ENCODE measurements at regions of chr19 and their contacts with region 1.

Region 1: DNA sequence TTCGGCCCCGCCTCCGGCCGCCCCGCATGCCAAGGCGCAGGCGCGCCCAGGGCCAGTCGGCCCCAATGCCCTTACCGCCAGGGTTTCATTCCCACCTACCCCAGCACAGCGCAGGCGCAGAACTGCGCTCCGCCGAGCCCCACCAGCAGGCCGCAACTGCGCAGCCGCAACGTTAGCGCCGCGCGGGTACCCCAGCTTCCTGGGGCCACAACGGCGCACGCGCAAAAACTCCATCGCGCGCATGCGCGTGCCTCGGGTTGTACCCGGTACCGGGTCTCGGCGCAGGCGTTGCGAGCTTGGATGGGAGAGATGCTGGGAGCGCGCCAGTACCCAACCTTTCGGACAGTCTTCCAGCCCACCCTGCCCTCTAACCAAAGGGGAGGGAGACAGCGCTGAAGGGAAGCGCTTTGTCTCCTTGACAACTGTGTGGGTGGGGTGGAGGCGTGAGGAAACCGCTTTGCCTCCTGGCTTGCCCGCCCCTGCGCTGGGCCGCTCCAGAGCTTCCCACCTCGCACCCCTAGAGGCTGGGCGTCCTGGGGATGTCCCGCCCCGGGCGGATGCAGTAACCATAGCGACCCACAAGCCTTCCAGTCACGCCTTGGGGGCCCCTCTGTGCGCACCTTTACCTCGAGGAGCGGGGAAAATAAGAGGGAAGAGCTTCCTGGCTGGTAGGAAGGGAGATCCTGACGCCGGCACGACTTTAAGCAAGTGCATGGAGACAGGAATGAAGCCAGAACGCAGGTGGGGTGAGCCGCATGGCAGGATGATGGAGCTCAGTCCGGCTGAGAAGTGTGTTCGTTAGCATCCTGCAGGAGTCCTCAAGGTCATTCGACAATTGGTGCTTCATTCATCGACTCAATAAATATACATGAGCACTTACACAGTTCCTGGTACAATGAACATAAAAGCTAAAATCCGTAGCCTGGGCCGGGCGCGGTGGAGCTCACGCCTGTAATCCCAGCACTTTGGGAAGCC is 525 bp upstream of the MYPOP start:
- DNase-seq: peak; percentile 95 to 97
- ATAC-seq: peak; percentile 95 to 96
- H3K4me3 ChIP-seq: peak overlapping the region; percentile 73 to 87 (median 79)
- H3K27ac ChIP-seq: peak overlapping the region; percentile 76 to 86 (median 82)
- H3K4me1 ChIP-seq: peaks cover 7 to 16% of the 10 kb centered on the region in 2 donors
- H3K27me3 ChIP-seq: no peaks in the 10 kb centered on the region
- CTCF ChIP-seq: no peak
- POLR2A ChIP-seq: peak in 1 of 2 donors; percentile 44

Region 2: DNA sequence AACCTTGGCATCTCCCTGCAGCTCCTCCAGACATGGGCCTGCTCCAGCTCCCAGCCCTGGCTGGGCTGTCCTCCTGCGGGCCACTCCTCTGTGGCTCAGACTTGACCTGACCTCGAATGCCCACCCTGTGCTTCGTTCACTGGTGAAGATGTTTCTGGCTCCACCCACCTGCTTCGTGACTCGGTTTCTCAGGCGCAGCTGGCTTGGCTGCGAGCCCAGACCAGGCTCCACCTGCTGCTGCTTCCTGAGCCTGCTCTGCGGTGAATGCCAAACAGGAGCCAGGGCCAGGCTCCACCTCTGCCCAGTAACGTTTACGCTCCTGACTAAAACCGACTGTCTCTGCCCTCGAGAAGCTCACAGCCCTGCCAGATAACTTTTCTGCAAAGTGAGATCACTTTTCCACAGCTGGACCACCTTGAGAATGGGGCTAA is 78.9 kb before region 1 on chr19:
- in situ Hi-C with region 1: no loop called
- intact Hi-C with region 1: no loop called
- DNase-seq: peak in 1 of 2 donors; percentile 40
- ATAC-seq: peak in 1 of 2 donors; percentile 43
- H3K4me3 ChIP-seq: no peak overlapping the region
- H3K27ac ChIP-seq: peak overlapping the region in 1 of 4 donors; percentile 25
- H3K4me1 ChIP-seq: peaks cover 0 to 7% of the 10 kb centered on the region in 2 donors
- H3K27me3 ChIP-seq: no peaks in the 10 kb centered on the region
- CTCF ChIP-seq: no peak
- POLR2A ChIP-seq: no peak

Region 3: GRCh38 chr19:45862564-45863334 is 40.2 kb before region 1 on chr19 and contains the start of gene SYMPK:
- in situ Hi-C with region 1: no loop called
- intact Hi-C with region 1: loop called (anchors 1 kb)
- DNase-seq: peak; percentile 98 to 99
- ATAC-seq: peak; percentile 99
- H3K4me3 ChIP-seq: peak within 1 kb of the TSS; percentile 62 to 95 (median 86)
- H3K27ac ChIP-seq: peak within 1 kb of the TSS; percentile 85 to 95 (median 90)
- H3K4me1 ChIP-seq: peaks cover 17 to 22% of the 10 kb centered on the region in 2 donors
- H3K27me3 ChIP-seq: peaks cover 10 to 16% (median 10%) of the 10 kb centered on the region in 3 donors
- CTCF ChIP-seq: no peak
- POLR2A ChIP-seq: peak; percentile 62 to 82
- total RNA-seq, gene SYMPK: 14.1 to 64.6 (median 34.9) TPM

Region 4: GRCh38 chr19:45876411-45877197 is 26.3 kb before region 1 on chr19:
- in situ Hi-C with region 1: no loop called
- intact Hi-C with region 1: no loop called
- DNase-seq: no peak
- ATAC-seq: no peak
- H3K4me3 ChIP-seq: peak overlapping the region in 3 of 4 donors; percentile 29 to 42 (median 32)
- H3K27ac ChIP-seq: peak overlapping the region; percentile 7 to 76 (median 52)
- H3K4me1 ChIP-seq: peaks cover 0 to 1% of the 10 kb centered on the region in 2 donors
- H3K27me3 ChIP-seq: peaks cover 0 to 9% (median 0%) of the 10 kb centered on the region in 3 donors
- CTCF ChIP-seq: no peak
- POLR2A ChIP-seq: no peak

Region 5: DNA sequence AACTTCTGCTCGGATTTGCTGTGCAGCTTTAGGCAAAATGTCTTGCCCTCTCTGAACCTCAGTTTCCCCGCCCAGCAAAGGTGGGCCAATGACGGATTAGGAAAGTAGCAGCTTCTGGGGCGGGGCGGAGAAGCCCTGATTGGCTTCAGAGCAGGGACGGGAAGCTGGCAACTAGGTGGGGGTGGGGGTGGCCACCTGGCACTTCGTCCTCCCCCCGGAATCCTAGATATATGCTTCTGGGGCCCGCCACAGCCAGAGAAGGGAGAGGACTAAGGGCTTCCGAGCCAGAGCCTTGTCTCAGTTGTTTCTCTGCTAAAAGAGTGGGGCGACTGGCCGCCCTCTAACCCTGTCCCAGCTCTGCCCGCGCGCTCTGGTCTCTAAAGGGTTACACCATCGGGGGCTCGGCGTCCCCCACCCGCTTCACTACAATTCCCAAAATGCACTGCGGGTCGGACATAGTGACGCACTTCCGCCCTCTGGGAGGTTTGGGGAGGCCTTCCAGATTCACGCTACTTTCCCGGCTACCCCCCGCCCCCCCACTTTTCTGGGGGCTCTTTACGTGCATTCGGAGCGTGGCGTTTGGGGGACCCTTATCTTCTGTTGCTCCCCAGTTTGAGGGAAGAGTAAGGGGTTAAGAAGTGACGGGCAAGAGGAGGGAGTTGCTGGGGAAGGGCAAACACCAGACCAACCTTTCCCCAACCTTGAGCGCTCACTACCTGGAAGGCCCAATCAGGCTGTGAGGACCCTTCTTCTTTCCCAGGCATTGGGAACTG is 16.3 kb before region 1 on chr19:
- in situ Hi-C with region 1: no loop called
- intact Hi-C with region 1: loop called (anchors 1 kb)
- DNase-seq: peak; percentile 82 to 89
- ATAC-seq: peak; percentile 89 to 91
- H3K4me3 ChIP-seq: peak overlapping the region; percentile 63 to 84 (median 66)
- H3K27ac ChIP-seq: peak overlapping the region; percentile 86 to 95 (median 92)
- H3K4me1 ChIP-seq: peaks cover 34 to 43% of the 10 kb centered on the region in 2 donors
- H3K27me3 ChIP-seq: no peaks in the 10 kb centered on the region
- CTCF ChIP-seq: peak in 1 of 5 experiments; percentile 11
- POLR2A ChIP-seq: peak; percentile 49 to 63

Region 6: GRCh38 chr19:45927565-45928261 is 24.8 kb after region 1 on chr19:
- in situ Hi-C with region 1: no loop called
- intact Hi-C with region 1: loop called (anchors 1 kb)
- DNase-seq: peak; percentile 84 to 85
- ATAC-seq: peak; percentile 87 to 99
- H3K4me3 ChIP-seq: peak overlapping the region in 2 of 4 donors; percentile 0 to 15
- H3K27ac ChIP-seq: no peak overlapping the region
- H3K4me1 ChIP-seq: peaks cover 0 to 7% of the 10 kb centered on the region in 2 donors
- H3K27me3 ChIP-seq: no peaks in the 10 kb centered on the region
- CTCF ChIP-seq: peak in 1 of 5 experiments; percentile 9
- POLR2A ChIP-seq: no peak

Region 7: DNA sequence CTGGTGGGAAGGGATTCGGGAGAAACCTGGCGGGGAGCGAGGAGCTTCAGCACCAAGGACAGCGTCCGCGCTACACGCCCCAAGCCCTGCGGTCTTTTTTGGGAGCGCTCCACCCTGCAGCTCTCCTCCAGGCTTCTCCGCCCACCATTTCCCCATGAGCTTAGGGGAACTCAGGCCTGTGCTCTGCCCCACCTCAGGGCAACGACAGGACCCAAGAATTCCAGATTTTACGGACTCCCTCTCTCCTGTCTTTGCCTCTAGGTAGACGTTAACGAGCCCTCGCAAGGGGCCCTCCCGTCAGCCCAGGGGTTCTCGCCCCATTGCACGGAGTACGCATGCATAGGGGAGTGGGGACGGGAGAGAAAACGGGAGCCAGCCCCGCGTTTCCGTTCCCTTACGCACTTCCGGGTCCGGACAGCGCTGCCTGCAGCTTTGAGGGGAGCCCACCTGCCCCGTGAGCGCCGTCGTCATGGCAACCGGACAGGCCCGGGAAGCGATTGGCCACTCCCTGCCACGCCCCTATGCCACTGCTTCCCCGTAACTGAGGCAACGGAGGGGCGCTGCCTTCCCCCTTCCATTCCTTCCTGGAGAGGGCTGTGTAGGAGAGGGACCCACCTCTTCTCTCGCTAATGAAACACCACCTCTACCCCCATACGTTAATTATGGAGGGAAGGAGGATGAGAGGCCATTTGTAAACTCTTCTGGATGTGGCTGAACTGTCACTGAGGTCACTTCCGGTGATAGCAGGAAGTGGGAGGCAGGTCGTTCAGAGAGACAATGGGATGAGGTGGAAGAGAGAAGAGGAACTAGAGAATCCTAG is 50.0 kb after region 1 on chr19:
- in situ Hi-C with region 1: no loop called
- intact Hi-C with region 1: no loop called
- DNase-seq: no peak
- ATAC-seq: no peak
- H3K4me3 ChIP-seq: no peak overlapping the region
- H3K27ac ChIP-seq: no peak overlapping the region
- H3K4me1 ChIP-seq: peaks cover 0 to 3% of the 10 kb centered on the region in 2 donors
- H3K27me3 ChIP-seq: peaks cover 2 to 21% (median 10%) of the 10 kb centered on the region in 3 donors
- CTCF ChIP-seq: no peak
- POLR2A ChIP-seq: no peak

Region 8: GRCh38 chr19:46346821-46347571 is 444.1 kb after region 1 on chr19 and contains the start of gene PPP5C:
- in situ Hi-C with region 1: no loop called
- intact Hi-C with region 1: loop called (anchors 2 kb)
- DNase-seq: peak; percentile 82 to 92
- ATAC-seq: peak; percentile 88 to 89
- H3K4me3 ChIP-seq: peak within 1 kb of the TSS; percentile 98 to 100 (median 100)
- H3K27ac ChIP-seq: peak within 1 kb of the TSS; percentile 90 to 97 (median 90)
- H3K4me1 ChIP-seq: peaks cover 41 to 45% of the 10 kb centered on the region in 2 donors
- H3K27me3 ChIP-seq: no peaks in the 10 kb centered on the region
- CTCF ChIP-seq: peak; percentile 56 to 82 (median 67)
- POLR2A ChIP-seq: peak; percentile 61 to 75
- total RNA-seq, gene PPP5C: 47.4 to 74.9 (median 62.8) TPM

Region 9: DNA sequence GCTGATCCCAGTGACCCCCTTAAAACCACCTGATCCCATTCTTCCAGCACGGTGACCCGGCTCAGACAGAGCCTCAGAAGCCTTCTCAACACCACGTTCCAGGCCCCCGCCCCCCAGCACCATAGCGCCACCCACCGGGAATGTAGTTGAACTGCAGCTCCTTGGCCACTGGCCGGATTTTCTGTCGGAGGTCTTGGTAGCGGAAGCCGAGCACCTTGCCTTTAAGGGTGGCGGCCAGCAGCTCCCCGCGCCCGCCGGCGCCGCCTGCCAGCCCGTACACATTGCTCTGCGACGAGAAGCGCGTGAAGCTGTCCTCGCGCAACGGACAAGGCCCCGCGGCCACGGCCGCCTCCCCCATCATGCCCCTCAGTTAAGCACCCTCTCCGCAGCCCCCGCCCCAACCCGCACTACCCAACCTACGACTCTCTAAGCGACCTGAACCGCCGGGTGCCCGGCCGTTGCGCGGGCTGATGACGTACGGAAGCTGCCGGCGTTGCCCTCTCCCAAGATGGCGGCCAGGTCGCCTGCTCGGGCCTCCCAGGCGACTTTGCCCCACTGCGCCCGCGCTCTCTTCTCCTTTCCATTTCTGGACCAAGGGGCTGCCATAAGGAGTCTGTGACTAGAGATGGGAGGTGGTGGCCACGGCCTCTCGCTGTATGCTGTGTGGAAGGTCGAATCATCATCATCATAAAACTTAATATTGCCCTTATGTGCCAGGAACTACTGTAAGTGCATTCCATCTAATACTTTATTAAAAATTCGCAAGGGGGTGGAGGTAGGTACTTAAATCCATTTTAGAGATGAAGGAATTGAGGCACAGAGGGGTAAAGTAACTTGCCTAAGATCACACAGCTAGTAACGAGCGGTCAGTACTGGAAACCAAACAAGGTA is 1581.1 kb after region 1 on chr19 and contains the start of gene KPTN:
- in situ Hi-C with region 1: no loop called
- intact Hi-C with region 1: loop called (anchors 10 kb)
- DNase-seq: peak; percentile 71 to 88
- ATAC-seq: peak; percentile 92 to 94
- H3K4me3 ChIP-seq: peak within 1 kb of the TSS; percentile 67 to 89 (median 79)
- H3K27ac ChIP-seq: peak within 1 kb of the TSS; percentile 89 to 95 (median 92)
- H3K4me1 ChIP-seq: peaks cover 0 to 5% of the 10 kb centered on the region in 2 donors
- H3K27me3 ChIP-seq: no peaks in the 10 kb centered on the region
- CTCF ChIP-seq: peak; percentile 67 to 95 (median 91)
- POLR2A ChIP-seq: no peak
- total RNA-seq, gene KPTN: 0.91 to 6.4 (median 3.9) TPM